Psoas muscle (tissue), 8 donors: ENCODE measurements at regions of chr22 and their contacts with region 1.

Region 1: DNA sequence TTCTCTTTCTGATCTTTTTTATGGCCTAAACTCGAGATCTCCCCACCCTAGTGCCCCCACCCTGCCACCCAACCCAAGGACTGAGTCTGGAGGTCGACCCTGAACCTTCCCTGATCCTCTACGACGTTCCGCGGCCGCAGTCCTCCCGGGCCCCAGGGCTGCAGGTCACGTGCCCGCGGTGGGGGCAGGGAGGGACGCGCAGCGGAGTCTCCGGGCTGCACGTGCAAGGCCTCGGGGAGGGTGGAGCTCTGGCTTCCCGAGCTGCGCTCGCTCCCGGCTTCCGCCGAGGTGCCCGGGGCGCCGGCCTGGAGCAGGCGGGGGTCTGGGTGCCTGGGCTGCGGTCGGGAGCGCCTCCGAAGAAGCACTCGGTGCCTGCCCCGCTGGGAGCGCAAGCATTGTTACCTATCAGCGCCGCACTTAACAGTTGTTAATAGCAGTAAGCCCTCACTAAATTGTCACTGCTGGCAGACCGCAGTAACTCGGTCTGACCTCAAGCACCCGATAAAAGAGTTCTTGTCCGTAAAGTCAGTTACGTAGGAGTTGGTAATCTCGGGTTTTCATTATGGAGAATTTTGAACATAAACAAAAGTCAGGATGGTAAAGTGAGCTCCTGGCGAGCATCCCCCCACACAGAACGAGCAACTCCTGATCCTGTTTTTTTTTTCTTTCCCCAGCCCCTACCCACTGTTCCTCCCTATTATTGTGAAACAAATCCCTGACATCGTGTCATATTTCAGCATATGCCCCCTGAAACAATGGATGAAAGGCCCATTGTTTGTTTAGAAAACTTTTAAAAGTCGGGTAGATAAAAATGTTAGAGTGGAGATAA is 69.7 kb upstream of the EP300 start:
- DNase-seq: peak; percentile 95 to 97
- ATAC-seq: peak; percentile 95 to 96 (median 96)
- H3K4me3 ChIP-seq: peak overlapping the region; percentile 73
- H3K27ac ChIP-seq: peak overlapping the region; percentile 97
- H3K4me1 ChIP-seq: peaks cover 7% of the 10 kb centered on the region
- H3K27me3 ChIP-seq: no peaks in the 10 kb centered on the region
- CTCF ChIP-seq: no peak

Region 2: DNA sequence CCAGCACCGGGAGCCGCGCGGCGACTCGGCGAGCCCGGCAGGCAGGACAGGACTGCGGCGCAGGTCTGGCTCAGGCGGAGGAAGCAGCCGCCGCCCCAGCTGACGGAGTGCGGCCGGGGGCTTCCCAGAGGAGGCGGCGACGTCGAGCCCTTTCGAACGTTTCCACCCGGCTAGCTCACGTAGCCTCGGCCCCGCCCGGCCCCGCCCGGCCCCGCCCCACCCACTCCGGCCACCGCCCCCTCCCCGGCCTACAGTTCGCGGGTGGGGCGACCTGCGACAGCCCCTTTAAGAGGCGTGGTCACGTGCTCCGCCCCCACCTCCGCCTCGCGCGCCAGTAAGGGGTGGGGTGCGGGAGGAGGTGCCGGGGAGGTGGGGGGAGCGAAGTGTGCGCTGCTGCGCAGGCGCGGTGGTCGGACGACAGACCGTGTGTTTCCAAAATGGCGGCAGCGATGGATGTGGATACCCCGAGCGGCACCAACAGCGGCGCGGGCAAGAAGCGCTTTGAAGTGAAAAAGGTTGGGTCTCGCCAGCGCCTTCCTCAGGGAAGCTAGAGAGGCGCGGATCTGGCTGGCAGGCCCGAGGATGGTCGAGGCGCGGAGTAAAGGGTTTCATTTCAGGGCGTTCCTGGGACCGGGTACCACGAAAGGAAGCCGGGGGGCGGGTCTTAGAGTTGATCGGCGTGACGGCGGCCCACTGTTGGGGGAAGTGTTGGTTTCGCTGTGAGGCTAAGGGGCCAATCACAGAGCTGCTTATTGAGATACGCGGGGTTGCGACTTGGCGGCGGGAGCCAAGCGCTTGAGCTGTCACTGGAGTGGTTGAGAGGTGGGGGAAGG is 71.5 kb before region 1 on chr22 and contains the start of gene RBX1:
- intact Hi-C with region 1: loop called (anchors 1 to 5 kb)
- DNase-seq: peak; percentile 97 to 99
- ATAC-seq: peak; percentile 95 to 96 (median 95)
- H3K4me3 ChIP-seq: peak within 1 kb of the TSS; percentile 95
- H3K27ac ChIP-seq: peak within 1 kb of the TSS; percentile 98
- H3K4me1 ChIP-seq: peaks cover 19% of the 10 kb centered on the region
- H3K27me3 ChIP-seq: no peaks in the 10 kb centered on the region
- CTCF ChIP-seq: no peak
- total RNA-seq, gene RBX1: 46.6 to 59.9 (median 54.3) TPM

Region 3: DNA sequence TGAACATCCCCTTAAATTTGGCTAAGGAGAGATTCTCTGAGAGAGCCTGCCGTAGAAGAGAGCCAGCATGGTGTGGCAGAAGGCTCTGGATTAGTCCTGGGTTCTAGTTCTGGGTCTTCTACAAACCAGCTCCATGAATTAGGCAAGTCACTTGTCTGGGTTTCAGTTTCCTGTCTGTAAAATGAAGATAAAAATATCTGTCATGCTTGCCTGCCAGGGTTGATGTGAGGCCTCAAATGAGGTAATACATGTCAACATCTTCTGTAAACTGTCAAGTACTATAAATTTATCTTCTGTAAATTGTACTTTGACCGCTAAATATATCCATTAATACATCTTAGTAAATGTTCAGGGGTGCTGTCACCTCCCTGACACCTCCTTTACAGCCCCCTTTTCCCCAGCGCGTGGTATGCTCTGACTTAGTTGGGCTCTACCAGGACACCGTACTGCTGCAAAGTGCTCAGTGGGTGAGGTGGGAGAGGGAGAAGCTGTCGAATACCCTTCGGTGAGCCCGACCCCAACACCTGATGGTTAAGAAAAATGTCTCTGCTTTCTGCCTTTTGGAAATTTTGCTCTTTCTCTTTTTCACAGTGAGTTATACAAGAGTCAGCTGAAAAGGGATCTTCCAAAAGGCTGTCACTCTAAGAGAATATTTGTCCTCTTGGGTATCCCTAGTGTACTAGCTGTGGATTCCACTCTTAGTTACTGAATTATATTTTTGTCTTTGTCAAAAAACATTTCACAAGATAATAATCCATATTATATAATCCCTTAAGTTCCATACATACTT is 56.6 kb before region 1 on chr22:
- intact Hi-C with region 1: loop called in 1 of 2 experiments (anchors 1 kb)
- DNase-seq: no peak
- ATAC-seq: peak; percentile 53 to 81 (median 74)
- H3K4me3 ChIP-seq: no peak overlapping the region
- H3K27ac ChIP-seq: peak overlapping the region; percentile 73
- H3K4me1 ChIP-seq: peaks cover 14% of the 10 kb centered on the region
- H3K27me3 ChIP-seq: no peaks in the 10 kb centered on the region
- CTCF ChIP-seq: no peak

Region 4: DNA sequence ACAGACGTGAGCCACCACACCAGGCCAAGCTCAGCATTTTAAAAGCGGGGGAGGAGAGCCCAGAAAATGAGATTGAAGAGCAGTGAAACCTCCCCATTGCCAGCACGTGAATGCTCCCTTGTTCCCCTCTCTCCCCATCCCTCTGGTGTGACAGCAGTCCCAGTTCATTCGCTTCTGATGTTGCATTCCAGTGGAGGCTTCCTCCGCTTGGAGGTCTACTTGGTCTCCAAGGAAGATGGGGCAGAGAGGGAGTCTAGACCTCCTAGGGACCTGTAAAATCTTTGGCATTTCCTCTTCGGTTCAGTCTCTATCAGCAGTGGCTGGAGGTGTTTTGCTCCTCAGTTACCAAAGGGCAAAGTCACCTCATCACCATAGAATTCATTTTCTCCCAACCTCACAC is 39.5 kb after region 1 on chr22:
- intact Hi-C with region 1: no loop called
- DNase-seq: no peak
- ATAC-seq: no peak
- H3K4me3 ChIP-seq: no peak overlapping the region
- H3K27ac ChIP-seq: no peak overlapping the region
- H3K4me1 ChIP-seq: no peaks in the 10 kb centered on the region
- H3K27me3 ChIP-seq: no peaks in the 10 kb centered on the region
- CTCF ChIP-seq: no peak

Region 5: GRCh38 chr22:41091132-41092022 is 68.7 kb after region 1 on chr22:
- intact Hi-C with region 1: loop called (anchors 1 to 2 kb)
- DNase-seq: peak; percentile 99 to 100
- ATAC-seq: peak; percentile 93 to 97 (median 96)
- H3K4me3 ChIP-seq: peak overlapping the region; percentile 98
- H3K27ac ChIP-seq: peak overlapping the region; percentile 100
- H3K4me1 ChIP-seq: peaks cover 26% of the 10 kb centered on the region
- H3K27me3 ChIP-seq: no peaks in the 10 kb centered on the region
- CTCF ChIP-seq: no peak